ENCODE measurements at regions of chr9 and their contacts with region 1.

Region 1: DNA sequence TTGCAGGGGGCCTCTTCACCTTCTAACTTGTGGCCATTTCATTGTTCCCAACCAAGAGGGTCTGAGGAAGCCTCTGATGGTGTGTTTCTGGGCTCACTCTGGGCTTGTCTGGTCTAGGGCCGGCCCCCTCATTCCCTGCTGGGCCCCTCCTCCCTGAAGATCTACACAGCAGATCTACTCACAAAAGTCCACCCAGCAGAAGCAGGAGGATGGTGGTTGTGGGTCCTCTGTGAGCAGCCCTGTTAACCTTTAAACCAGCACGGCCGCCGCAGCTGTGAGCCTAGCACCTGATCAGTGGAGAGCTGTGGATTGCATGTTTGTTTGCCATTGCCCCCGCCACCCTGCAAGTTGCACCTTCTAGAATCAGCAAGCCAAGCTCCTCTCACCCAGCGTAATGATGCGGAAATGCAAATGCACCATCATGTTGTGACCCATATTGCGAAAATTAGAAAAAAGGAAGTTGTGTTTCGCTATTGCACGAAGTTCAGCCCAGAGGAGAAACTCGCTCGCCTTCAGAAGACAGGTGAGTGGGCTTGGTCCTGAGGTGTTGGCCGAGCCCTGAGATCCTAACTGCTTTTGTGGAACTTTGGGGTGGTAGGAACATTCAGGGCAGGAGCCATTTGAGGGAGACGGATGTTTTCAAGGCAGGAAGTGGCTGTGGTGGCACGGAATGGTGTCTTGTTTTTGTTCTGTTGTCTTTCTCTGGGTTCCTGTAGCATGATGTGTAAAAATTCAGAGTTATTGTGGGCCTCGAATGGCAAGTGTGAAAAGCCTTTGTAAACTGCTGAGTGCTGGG is 16.7 kb downstream of the FGD3 start:
- DNase-seq: peak; percentile 90
- ATAC-seq: peak; percentile 64
- H3K4me3 Mint-ChIP-seq: peak overlapping the region; percentile 98
- H3K27ac Mint-ChIP-seq: peak overlapping the region; percentile 100
- H3K4me1 Mint-ChIP-seq: peaks cover 55% of the 10 kb centered on the region
- H3K27me3 Mint-ChIP-seq: no peaks in the 10 kb centered on the region
- CTCF ChIP-seq: no peak

Region 2: GRCh38 chr9:92877531-92878430 is 86.2 kb before region 1 on chr9 and contains the start of gene ZNF484:
- CTCF ChIA-PET with region 1: no interaction called
- POLR2A ChIA-PET with region 1: no interaction called
- intact Hi-C with region 1: loop called (anchors 5 kb)
- DNase-seq: peak; percentile 99
- ATAC-seq: peak; percentile 96
- H3K4me3 Mint-ChIP-seq: peak within 1 kb of the TSS; percentile 93
- H3K27ac Mint-ChIP-seq: peak within 1 kb of the TSS; percentile 99
- H3K4me1 Mint-ChIP-seq: peaks cover 38% of the 10 kb centered on the region
- H3K27me3 Mint-ChIP-seq: no peaks in the 10 kb centered on the region
- CTCF ChIP-seq: no peak
- total RNA-seq, gene ZNF484: 5.8 to 6.2 TPM

Region 3: DNA sequence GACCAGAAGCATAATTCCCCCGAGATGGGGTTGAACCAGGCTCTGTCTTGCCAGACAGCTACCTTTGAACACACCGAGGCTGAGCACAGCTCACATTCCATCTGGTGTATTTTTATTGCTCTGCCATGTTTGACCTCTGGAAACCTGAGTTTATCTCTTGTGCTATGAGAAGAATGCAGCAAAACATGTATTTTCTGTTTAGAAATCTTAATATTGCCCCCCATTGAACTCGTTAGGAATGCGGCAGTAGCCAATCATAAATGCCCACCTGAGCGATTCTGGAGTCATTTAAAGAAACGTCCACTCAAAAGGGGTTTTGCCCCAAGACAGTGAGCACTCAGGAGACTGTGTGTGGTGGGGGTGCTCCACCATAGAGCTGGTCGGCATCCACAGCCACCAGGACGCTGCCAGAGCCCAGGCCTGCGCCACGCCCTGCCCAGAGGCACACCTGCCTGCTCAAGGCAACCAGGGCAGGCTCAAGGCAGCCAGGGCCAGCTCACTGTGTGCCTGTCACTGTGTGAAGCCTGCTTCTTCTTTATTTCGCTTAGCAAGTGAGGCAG is 10.2 kb after region 1 on chr9:
- CTCF ChIA-PET with region 1: interaction called, 4 read pairs
- POLR2A ChIA-PET with region 1: interaction called, 32 read pairs
- intact Hi-C with region 1: no loop called
- DNase-seq: no peak
- ATAC-seq: no peak
- H3K4me3 Mint-ChIP-seq: no peak overlapping the region
- H3K27ac Mint-ChIP-seq: peak overlapping the region; percentile 83
- H3K4me1 Mint-ChIP-seq: peaks cover 85% of the 10 kb centered on the region
- H3K27me3 Mint-ChIP-seq: no peaks in the 10 kb centered on the region
- CTCF ChIP-seq: no peak

Region 4: DNA sequence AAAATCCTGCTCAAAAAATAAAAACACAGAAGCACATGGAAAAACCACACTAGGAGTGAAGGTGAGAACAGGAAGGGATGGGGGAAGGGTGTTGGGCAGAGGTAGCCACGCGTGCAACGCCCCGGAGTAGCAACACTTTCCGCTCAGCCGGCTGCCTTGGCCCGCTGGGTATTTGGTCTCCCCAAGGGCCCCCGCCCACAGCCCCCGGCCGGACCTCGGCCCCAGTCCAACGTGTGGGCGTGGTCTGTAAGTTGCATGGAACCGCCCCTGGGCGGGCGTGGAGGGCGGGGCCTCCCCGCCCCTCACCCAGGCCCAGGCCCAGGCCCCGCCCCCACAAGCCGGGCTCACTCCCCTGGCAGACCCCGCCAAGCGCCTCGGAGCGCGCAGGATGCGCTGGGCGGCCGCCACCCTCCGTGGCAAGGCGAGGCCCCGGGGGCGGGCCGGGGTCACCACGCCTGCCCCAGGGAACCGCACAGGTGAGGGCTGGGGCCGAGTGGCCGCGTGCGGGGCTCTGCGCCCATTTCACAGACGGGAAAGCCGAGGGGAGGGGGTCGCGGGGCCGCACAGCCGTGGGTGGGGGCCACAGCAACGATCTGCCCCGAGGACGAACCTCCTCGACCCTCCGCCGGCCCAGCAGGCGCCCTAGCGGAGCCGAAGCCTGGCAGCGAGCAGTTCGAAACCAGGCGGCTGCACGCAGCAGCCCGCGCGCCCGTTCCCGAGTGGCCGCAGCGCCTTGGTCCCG is 94.5 kb after region 1 on chr9 and contains the start of gene SUSD3:
- CTCF ChIA-PET with region 1: interaction called, 3 read pairs
- POLR2A ChIA-PET with region 1: interaction called, 15 read pairs
- intact Hi-C with region 1: loop called (anchors 5 kb)
- DNase-seq: peak; percentile 76
- ATAC-seq: peak; percentile 63
- H3K4me3 Mint-ChIP-seq: peak within 1 kb of the TSS; percentile 86
- H3K27ac Mint-ChIP-seq: peak within 1 kb of the TSS; percentile 97
- H3K4me1 Mint-ChIP-seq: peaks cover 51% of the 10 kb centered on the region
- H3K27me3 Mint-ChIP-seq: no peaks in the 10 kb centered on the region
- CTCF ChIP-seq: no peak
- total RNA-seq, gene SUSD3: 34.6 to 36.7 TPM

Region 5: DNA sequence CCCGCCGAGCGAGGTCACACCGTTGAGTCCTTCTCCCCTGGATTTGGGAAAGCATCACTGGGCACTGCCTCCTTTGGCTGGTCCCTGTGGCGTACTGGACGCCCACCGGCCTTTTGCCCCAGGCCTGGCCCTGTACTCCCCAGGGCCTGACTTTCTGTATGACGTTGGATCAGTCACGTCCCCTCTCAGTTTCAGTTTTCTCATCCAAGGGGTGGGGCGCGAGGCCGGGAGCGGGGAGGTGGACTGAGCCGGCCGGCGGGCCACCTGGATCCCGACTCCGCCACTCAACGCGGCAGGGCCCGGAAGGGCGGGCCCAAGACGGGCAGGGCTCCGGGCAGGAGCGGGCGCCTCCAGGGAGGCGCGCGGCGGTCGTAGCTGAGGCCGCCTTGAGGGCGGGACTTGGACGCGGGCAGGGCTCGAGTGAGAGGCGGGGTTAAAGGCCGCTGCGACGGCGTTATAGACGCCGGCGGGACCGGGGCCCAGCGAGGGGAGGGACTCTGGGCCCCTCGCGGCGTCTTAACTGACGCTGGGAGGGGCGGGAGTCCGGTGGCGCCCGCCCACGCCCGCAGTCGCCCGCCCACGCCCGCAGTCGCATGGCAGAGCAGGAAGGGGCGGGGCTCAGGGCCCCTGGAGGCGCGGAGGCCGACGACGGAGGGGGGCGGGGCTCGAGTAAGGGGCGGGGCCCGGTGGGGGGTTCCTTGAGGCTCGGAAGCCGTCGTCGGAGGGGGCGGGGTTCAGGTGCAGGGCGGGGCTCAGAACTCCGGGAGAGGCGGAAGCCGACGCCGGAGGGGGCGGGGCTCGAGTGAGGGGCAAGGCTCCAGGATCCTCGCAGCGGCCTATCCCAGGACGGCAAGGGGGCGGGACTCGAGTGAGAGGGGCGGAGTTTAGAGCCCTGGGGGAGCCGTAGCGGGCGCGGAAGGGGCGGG is 131.4 kb after region 1 on chr9:
- CTCF ChIA-PET with region 1: interaction called, 3 read pairs
- POLR2A ChIA-PET with region 1: interaction called, 6 read pairs
- intact Hi-C with region 1: loop called (anchors 10 kb)
- DNase-seq: peak; percentile 100
- ATAC-seq: peak; percentile 82
- H3K4me3 Mint-ChIP-seq: peak overlapping the region; percentile 86
- H3K27ac Mint-ChIP-seq: peak overlapping the region; percentile 97
- H3K4me1 Mint-ChIP-seq: peaks cover 67% of the 10 kb centered on the region
- H3K27me3 Mint-ChIP-seq: no peaks in the 10 kb centered on the region
- CTCF ChIP-seq: no peak

Measured in activated CD8-positive, alpha-beta T cell treated with anti-CD3 and anti-CD28 coated beads for 36 hours (primary cell).